HEK293T (cell line): ENCODE measurements at regions of chr16 and their contacts with region 1.

Region 1: GRCh38 chr16:68328151-68328859 is 17.5 kb downstream of the PRMT7 start:
- DNase-seq: peak; percentile 90

Region 2: DNA sequence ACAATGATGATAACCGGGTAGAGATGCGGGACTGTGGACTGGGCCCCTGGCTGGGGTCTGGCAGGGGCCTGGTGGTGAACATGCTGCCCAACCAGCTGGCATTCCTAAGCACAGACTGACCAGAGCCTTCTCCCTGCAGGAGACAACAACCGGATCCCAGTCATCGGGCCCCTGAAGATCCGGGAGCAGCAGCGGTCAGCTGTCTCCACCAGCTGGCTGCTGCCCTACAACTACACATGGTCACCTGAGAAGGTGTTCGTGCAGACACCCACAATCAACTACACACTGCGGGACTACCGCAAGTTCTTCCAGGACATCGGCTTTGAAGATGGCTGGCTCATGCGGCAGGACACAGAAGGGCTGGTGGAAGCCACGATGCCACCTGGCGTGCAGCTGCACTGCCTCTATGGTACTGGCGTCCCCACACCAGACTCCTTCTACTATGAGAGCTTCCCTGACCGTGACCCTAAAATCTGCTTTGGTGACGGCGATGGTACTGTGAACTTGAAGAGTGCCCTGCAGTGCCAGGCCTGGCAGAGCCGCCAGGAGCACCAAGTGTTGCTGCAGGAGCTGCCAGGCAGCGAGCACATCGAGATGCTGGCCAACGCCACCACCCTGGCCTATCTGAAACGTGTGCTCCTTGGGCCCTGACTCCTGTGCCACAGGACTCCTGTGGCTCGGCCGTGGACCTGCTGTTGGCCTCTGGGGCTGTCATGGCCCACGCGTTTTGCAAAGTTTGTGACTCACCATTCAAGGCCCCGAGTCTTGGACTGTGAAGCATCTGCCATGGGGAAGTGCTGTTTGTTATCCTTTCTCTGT is 69.1 kb before region 1 on chr16:
- CTCF ChIA-PET with region 1: interaction called, 28 read pairs
- POLR2A ChIA-PET with region 1: interaction called, 7 read pairs
- DNase-seq: no peak

Region 3: DNA sequence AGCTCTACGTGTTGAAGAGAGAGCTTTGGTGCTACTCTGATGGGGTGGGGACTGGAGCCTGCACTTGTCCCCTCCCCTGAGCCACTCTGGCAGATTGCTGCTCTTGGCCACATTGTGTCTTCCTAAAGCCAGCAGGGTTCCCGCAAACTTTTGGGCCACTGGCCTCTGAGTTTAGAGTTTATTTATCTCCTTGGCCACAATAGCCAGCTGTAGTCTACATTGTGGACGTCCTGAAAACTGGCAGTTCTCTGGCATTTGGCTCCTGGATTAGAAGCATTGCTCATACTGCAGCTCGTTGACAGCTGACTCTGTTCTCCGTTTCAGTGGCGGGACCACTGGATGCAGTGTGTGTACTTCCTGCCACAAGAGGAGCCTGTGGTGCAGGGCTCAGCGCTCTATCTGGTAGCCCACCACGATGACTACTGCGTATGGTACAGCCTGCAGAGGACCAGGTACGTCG is 17.1 kb after region 1 on chr16:
- CTCF ChIA-PET with region 1: no interaction called
- POLR2A ChIA-PET with region 1: no interaction called
- DNase-seq: no peak

Region 4: GRCh38 chr16:68382296-68382718 is 54.0 kb after region 1 on chr16:
- CTCF ChIA-PET with region 1: no interaction called
- POLR2A ChIA-PET with region 1: no interaction called
- DNase-seq: peak; percentile 62

Region 5: GRCh38 chr16:68426351-68426660 is 98.0 kb after region 1 on chr16:
- CTCF ChIA-PET with region 1: no interaction called
- POLR2A ChIA-PET with region 1: no interaction called
- DNase-seq: no peak

Region 6: DNA sequence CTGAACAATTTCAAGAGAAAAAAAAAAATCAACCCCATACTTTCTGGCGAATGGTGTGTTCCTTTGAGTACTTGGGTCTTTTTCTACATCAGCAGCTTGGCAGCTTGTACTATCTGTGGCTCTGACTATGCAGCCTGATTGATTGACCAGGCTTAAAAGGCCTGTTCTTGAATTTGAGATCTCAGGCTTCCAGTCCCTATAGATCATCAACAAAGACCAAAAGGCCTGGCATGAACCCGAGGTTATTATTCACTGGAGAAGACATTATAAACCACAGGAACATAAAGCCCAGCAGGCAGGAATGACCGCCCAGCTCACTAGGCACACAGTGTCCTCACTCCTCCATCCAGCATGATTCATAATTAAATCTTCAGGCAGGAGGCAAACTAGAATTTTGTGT is 284.7 kb after region 1 on chr16:
- CTCF ChIA-PET with region 1: no interaction called
- POLR2A ChIA-PET with region 1: no interaction called
- DNase-seq: no peak